ENCODE measurements at regions of chr7 and their contacts with region 1.

Region 1: DNA sequence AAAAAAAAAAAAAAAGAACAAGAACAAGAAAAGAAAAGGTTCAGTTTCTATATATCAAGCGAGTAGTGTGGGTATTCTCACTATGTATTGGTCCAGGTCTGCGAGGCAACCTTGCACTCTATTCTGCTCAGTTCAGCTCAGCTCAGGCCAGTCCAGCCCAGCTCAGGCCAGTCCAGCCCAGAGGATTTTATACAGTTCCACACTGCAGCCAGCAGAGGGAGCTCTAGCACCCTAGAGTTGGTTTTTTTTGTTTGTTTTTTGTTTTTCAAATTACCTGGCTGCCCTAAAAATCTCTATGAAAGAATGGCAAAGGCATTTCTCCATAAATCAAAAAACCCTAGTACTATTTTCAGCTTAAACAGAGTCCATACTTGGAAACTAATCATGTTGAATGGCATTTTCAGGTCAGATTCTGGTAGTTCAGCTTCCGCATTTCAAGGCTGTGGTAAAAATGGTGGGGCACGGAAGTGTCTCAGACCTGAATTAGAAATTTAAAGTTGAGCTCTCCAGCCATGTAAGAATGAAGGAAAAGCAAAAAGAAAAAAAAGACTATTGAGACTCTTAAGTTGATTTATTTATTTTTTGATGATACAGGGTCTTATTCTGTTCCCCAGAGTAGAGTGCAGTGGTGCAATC is 55.2 kb upstream of the GSDME start:
- DNase-seq: peak; percentile 47 to 77
- ATAC-seq: peak; percentile 81 to 90 (median 86)
- H3K4me3 ChIP-seq: no peak overlapping the region
- H3K4me3 Mint-ChIP-seq: no peak overlapping the region
- H3K27ac ChIP-seq: no peak overlapping the region
- H3K27ac Mint-ChIP-seq: peak overlapping the region in 1 of 2 donors; percentile 22
- H3K4me1 ChIP-seq: no peaks in the 10 kb centered on the region
- H3K4me1 Mint-ChIP-seq: no peaks in the 10 kb centered on the region
- H3K27me3 ChIP-seq: no peaks in the 10 kb centered on the region
- H3K27me3 Mint-ChIP-seq: no peaks in the 10 kb centered on the region
- CTCF ChIP-seq: peak; percentile 97

Region 2: DNA sequence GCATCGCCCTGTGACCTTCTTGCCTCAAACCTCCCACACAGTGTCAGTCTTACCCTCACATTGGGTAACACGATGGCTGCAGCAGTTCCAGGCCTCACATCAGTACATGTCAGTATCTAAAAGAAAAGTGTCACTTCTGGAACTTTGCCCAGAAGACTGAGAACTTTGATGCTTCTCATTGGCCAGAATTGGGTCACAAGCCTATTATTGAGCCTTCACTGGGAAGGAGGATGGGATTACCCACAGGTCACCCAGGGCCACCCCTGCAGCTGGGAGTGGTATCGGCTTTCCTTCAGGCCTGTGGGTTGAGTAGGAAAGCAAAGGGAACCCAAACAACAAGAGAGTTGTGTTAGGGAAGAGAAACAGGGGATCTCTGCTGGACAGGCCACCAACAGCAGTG is 416.9 kb before region 1 on chr7:
- intact Hi-C with region 1: no loop called
- DNase-seq: no peak
- ATAC-seq: no peak
- H3K4me3 ChIP-seq: no peak overlapping the region
- H3K4me3 Mint-ChIP-seq: no peak overlapping the region
- H3K27ac ChIP-seq: no peak overlapping the region
- H3K27ac Mint-ChIP-seq: no peak overlapping the region
- H3K4me1 ChIP-seq: no peaks in the 10 kb centered on the region
- H3K4me1 Mint-ChIP-seq: no peaks in the 10 kb centered on the region
- H3K27me3 ChIP-seq: no peaks in the 10 kb centered on the region
- H3K27me3 Mint-ChIP-seq: peaks cover 7 to 22% of the 10 kb centered on the region in 2 donors
- CTCF ChIP-seq: no peak

Region 3: DNA sequence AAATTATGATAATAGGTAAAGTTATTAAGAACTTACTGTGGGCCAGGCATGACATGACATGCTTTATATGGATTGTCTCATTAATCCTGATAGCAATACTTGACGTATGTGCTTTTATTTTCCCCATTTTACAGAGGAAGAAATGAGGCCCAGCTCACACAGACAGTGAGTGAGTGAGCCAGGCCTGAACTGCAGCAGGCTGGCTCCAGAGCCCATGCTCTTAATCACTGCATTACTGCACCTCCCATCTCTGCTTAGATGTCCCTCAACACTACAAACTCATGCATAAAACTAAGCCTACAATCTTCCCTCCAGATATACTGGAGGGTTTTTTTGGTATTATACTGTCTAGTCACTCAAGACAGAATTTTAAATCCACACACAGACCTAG is 236.0 kb after region 1 on chr7:
- intact Hi-C with region 1: no loop called
- DNase-seq: no peak
- ATAC-seq: no peak
- H3K4me3 ChIP-seq: no peak overlapping the region
- H3K4me3 Mint-ChIP-seq: no peak overlapping the region
- H3K27ac ChIP-seq: no peak overlapping the region
- H3K27ac Mint-ChIP-seq: no peak overlapping the region
- H3K4me1 ChIP-seq: no peaks in the 10 kb centered on the region
- H3K4me1 Mint-ChIP-seq: no peaks in the 10 kb centered on the region
- H3K27me3 ChIP-seq: no peaks in the 10 kb centered on the region
- H3K27me3 Mint-ChIP-seq: peaks cover 0 to under 1% of the 10 kb centered on the region in 2 donors
- CTCF ChIP-seq: no peak

Region 4: DNA sequence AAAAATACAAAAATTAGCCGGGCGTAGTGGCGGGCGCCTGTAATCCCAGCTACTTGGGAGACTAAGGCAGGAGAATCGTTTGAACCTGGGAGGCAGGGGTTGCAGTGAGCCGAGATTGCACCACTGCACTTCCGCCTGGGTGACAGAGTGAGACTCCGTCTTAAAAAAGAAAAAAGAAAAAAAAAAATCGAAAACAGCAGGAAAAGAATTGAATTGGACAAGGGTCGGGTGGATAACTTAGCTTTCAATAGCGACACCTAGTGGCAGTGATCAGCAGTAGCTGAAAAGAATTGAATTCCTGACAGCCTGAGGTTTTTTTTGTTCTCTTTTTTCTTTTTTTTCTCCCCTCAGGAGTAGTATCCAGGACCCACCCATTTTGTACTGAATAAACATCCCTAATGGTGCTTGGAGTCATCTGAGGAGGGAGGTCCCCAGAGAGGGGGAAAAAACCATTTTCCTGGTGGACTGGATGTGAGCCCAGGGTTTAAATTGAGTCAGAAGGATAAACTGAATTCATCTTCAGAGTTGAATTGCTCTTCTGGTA is 257.5 kb after region 1 on chr7:
- intact Hi-C with region 1: loop called (anchors 1 kb)
- DNase-seq: peak in 1 of 2 donors; percentile 84
- ATAC-seq: peak; percentile 55 to 73 (median 70)
- H3K4me3 ChIP-seq: no peak overlapping the region
- H3K4me3 Mint-ChIP-seq: no peak overlapping the region
- H3K27ac ChIP-seq: no peak overlapping the region
- H3K27ac Mint-ChIP-seq: no peak overlapping the region
- H3K4me1 ChIP-seq: peaks cover 4% of the 10 kb centered on the region
- H3K4me1 Mint-ChIP-seq: no peaks in the 10 kb centered on the region
- H3K27me3 ChIP-seq: no peaks in the 10 kb centered on the region
- H3K27me3 Mint-ChIP-seq: peaks cover 0 to 2% of the 10 kb centered on the region in 2 donors
- CTCF ChIP-seq: peak; percentile 98

Region 5: DNA sequence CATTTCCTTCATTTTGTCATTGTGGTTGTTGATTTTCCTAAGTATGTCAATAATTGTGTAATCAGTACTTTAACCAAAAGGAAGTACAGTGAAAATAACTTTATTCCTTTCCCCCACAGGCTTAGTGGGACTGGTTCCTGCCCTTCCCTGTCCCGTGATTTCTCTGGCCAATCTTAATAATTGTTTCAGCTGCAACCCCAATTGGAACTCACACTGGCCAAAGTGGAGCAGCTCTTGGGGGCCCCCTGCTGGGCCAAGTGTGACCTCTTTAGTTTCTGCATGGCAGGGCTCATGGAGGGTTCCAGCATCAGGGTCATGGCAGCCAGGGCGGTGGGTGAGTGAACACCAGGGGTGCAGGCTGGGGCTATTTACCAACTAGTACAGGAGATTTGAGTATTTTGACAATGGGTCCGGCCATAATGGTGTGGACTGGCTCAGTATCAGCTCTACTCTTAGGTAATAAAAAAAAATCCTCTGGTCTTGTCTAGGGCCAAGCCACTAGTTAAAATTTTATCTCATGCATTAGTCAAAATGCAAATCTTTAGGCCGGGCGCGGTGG is 280.9 kb after region 1 on chr7:
- intact Hi-C with region 1: loop called (anchors 1 kb)
- DNase-seq: peak; percentile 73 to 82
- ATAC-seq: peak; percentile 86 to 90 (median 90)
- H3K4me3 ChIP-seq: no peak overlapping the region
- H3K4me3 Mint-ChIP-seq: no peak overlapping the region
- H3K27ac ChIP-seq: no peak overlapping the region
- H3K27ac Mint-ChIP-seq: no peak overlapping the region
- H3K4me1 ChIP-seq: peaks cover 4% of the 10 kb centered on the region
- H3K4me1 Mint-ChIP-seq: peaks cover 6 to 7% of the 10 kb centered on the region in 2 donors
- H3K27me3 ChIP-seq: no peaks in the 10 kb centered on the region
- H3K27me3 Mint-ChIP-seq: peaks cover 0 to 3% of the 10 kb centered on the region in 2 donors
- CTCF ChIP-seq: peak; percentile 82

Region 6: GRCh38 chr7:25098096-25099046 is 285.9 kb after region 1 on chr7:
- intact Hi-C with region 1: loop called (anchors 1 kb)
- DNase-seq: peak; percentile 42 to 84
- ATAC-seq: peak; percentile 90 to 93 (median 92)
- H3K4me3 ChIP-seq: no peak overlapping the region
- H3K4me3 Mint-ChIP-seq: no peak overlapping the region
- H3K27ac ChIP-seq: no peak overlapping the region
- H3K27ac Mint-ChIP-seq: no peak overlapping the region
- H3K4me1 ChIP-seq: peaks cover 4% of the 10 kb centered on the region
- H3K4me1 Mint-ChIP-seq: peaks cover 3% of the 10 kb centered on the region in 2 donors
- H3K27me3 ChIP-seq: no peaks in the 10 kb centered on the region
- H3K27me3 Mint-ChIP-seq: peaks cover 0 to under 1% of the 10 kb centered on the region in 2 donors
- CTCF ChIP-seq: peak; percentile 84

Measured in natural killer cell (primary cell).